ENCODE measurements at regions of chr10 and their contacts with region 1.

Region 1: GRCh38 chr10:132387764-132388210 is 9.2 kb upstream of the PWWP2B start:
- H3K4me3 ChIP-seq: no peak overlapping the region
- H3K27ac ChIP-seq: peak overlapping the region; percentile 50; the same call in 1 of the 2 replicates
- H3K4me1 ChIP-seq: peaks cover 3% of the 10 kb centered on the region; the same call in 1 of the 2 replicates
- CTCF ChIP-seq: peak; percentile 76

Region 2: DNA sequence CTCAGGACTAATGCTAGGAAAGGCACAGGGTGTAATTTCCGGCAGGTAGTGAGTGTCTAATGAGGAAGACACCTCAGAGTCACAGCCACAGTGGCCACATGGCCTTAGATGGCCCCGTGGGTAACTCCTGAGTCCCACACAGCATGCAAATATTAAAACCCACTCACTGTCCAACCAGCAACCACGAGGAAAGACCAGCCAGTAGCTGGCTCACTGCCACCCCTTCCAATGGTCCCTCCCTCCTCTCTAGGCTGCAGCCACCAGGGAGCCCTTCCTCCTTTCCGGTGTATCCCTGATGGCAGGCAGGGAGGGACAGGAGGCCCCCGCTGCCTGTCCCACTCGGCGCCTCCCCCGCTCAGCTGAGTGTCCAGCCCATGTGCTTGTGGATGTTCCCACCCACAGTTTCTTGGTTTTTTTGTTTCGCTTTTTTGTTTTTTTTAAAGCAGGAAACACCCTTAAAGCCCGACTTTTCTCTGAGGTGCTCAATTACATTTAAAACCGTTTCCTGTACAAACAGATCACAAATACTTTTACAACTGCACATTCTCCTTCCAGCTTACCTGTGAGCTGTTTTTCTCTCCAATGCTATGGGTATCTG is 415.2 kb before region 1 on chr10:
- CTCF ChIA-PET with region 1: no interaction called
- POLR2A ChIA-PET with region 1: no interaction called
- H3K4me3 ChIP-seq: no peak overlapping the region
- H3K27ac ChIP-seq: no peak overlapping the region
- H3K4me1 ChIP-seq: peaks cover 6% of the 10 kb centered on the region; the same call in 1 of the 2 replicates
- CTCF ChIP-seq: no peak

Region 3: DNA sequence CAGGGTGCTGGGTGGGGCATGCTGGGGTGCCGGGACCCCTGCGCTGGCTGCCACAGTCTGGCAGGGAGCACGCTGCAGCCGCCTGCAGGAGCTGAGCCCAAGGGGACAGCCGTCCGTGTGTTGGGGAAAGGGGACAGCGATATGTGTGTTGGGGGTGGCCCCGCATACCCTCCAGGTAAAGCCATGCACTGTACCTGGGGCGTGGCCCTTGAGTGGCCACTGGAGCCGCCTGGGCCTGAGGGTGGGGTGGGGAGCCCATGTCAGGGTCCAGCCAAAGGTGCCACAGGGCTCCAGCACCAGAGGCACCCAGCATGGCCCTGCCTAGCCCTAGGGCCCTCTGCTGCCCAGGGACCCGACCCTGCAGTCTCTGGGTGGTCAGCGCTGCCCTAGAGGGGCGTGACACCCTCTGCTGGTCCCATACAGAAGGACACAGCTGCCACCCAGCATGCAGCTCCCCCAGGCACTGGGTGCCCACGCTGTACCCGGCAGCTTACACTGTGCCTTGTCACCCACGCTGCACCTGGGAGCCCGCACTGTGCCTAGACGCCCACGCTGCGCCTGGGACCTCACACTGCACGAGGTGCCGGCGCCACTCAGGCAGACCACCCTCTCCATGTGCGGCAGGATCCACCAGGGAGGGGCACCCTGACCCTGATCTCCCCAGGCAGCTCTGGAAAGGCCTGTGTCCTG is 64.3 kb after region 1 on chr10:
- CTCF ChIA-PET with region 1: interaction called, 12 read pairs
- POLR2A ChIA-PET with region 1: interaction called, 3 read pairs
- H3K4me3 ChIP-seq: no peak overlapping the region
- H3K27ac ChIP-seq: no peak overlapping the region
- H3K4me1 ChIP-seq: peaks cover under 1% of the 10 kb centered on the region
- CTCF ChIP-seq: peak; percentile 60; the same call in 1 of the 2 replicates

Measured in HEK293 (cell line).